ENCODE measurements at regions of chr3 and their contacts with region 1.

Region 1: DNA sequence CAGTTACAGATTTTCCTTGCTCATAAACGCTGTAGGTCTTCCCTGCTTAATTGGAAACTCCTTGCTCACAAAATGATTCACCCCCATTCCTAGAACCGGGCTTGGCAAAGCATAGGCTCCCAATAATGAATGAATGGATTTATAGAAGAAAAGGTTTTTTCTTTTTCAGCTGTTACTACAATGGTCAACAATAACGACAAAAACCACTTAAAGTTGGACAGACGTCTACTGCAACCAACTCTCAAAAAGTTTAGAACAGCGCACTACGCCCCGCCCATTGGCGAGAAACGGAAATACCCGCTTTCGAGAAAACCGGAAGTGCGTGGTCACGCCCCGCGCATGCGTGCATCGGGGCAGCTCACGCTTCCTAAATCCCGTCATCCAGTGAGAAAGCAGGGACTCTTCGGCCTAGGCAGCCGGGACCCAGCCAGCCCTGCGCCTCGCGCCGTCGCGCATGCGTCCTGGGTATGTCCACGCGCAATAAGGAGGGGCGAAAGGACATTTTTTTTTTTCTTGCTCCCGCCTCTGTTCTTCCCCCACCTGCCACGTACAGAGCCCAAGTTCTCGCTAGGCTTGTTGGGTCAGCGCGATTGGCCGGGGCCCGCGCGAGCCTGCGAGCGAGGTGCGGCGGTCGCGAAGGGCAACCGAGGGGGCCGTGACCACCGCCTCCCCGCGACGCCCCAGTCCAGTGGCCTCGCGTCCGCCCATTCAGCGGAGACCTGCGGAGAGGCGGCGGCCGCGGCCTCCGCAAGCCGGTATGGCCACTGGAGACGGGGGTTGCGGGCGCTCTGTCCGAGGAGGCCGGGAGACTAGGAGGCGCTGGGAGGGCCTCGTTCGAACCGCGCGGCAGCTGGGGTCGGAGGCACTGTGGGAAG is at the start of gene TFG:
- DNase-seq: peak; percentile 99
- ATAC-seq: peak; percentile 98 to 99 (median 98)
- H3K4me3 ChIP-seq: peak within 1 kb of the TSS; percentile 90
- H3K27ac ChIP-seq: peak within 1 kb of the TSS; percentile 93
- H3K4me1 ChIP-seq: peaks cover 23% of the 10 kb centered on the region
- H3K27me3 ChIP-seq: peaks cover 0 to 4% (median 0%) of the 10 kb centered on the region in 3 donors
- CTCF ChIP-seq: no peak
- total RNA-seq, gene TFG: 55.8 to 69.7 (median 63.4) TPM

Region 2: DNA sequence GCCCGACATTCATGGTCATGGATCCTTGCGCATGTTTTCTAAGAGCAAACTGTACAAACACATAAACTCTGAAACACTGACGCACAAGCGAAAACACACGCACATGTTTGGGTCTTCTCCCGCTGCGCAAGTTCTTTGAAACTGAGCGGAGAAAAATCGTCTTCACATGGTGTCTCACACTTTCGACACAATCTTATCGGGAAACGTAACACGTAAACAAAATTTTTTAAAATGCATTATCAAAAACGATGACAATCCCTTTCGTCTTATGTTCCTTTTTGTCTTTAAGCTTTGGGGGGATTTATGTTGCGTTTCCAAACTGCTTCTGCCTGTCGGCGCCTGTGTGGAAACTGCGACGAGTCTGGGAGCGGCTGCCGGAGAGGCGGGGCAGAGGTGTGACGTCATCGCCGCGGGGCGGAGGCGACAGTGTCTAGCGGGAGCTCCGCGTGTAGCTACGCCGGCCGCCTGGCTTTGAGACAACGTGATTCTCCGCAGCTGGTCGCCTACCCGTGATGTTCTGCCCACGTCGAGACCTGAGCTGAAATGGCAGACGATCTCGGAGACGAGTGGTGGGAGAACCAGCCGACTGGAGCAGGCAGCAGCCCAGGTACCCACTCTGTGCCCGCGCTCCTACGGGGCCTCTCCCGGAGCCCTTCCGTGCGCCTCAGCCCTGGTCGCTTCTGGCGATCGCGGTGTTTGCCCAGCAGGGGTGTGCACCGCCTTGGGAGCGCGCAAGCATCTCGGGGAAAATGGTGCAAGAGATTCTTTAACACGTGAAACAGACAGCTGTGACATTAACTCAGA is 891.6 kb before region 1 on chr3 and contains the start of gene CMSS1:
- intact Hi-C with region 1: loop called in 1 of 2 experiments (anchors 10 kb)
- DNase-seq: peak; percentile 97 to 98
- ATAC-seq: peak; percentile 92 to 96 (median 94)
- H3K4me3 ChIP-seq: peak within 1 kb of the TSS; percentile 85
- H3K27ac ChIP-seq: peak within 1 kb of the TSS; percentile 98
- H3K4me1 ChIP-seq: peaks cover 27% of the 10 kb centered on the region
- H3K27me3 ChIP-seq: no peaks in the 10 kb centered on the region
- CTCF ChIP-seq: peak; percentile 31
- total RNA-seq, gene CMSS1: 18.4 to 174 (median 56.1) TPM

Region 3: DNA sequence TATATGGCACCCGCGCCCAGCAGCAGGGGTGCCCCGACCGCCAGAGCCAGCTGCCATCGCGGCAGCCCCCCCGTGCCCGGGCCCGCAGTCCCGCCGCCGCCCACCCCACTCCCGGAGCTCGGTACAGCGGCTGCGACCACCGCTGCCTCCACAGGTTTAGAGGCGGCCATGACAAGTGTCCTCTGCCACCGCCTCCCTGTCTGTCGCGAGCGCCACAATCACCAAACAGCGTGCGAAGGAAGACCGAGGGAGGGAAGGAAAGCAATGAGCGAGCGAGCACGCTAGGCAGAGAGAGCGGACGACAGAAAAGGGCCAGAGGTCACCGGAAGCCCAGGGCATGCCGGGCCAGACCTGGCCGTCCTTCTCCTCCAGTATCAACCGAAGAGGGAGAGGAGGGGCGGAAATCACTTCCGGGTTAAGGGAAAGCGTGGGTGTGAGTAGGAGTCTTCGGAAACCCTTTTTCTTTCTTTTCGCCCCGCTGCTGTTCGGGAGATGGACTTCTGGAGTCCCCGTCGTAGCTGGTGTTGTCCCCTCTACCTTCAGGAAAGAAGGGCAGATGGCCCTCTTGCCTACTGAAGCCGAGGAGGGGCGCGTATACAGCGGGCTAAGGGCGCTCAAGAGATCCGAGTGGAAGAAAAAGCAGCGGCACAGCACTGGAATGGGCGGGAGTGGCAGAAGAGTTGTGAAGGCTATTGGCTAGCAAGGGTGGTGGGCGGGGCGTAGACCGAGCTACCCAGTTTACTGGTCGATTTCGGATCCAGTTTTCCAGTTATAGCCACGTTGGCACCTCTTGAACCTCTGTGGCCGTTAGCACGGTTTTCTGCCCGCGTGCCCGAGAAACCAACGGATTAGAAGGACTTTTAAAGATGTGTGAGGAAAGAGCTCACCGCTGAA is 308.2 kb before region 1 on chr3 and contains the starts of genes LNP1 and TOMM70:
- intact Hi-C with region 1: loop called in 1 of 2 experiments (anchors 10 kb)
- DNase-seq: peak; percentile 98
- ATAC-seq: peak; percentile 96 to 98 (median 96)
- H3K4me3 ChIP-seq: peak within 1 kb of the TSS; percentile 99
- H3K27ac ChIP-seq: peak within 1 kb of the TSS; percentile 96
- H3K4me1 ChIP-seq: peaks cover 54% of the 10 kb centered on the region
- H3K27me3 ChIP-seq: no peaks in the 10 kb centered on the region
- CTCF ChIP-seq: no peak
- total RNA-seq, gene LNP1: 1.6 to 3.2 (median 1.9) TPM
- total RNA-seq, gene TOMM70: 67.8 to 94.5 (median 84.1) TPM